IMR-90 (cell line): ENCODE measurements at regions of chr2 and their contacts with region 1.

Region 1: GRCh38 chr2:216195565-216196029 is 86.4 kb downstream of the XRCC5 start:
- DNase-seq: peak; percentile 94
- ATAC-seq: peak; percentile 94
- H3K4me3 ChIP-seq: no peak overlapping the region
- H3K27ac ChIP-seq: no peak overlapping the region
- H3K4me1 ChIP-seq: peaks cover 8% of the 10 kb centered on the region
- H3K27me3 ChIP-seq: no peaks in the 10 kb centered on the region
- CTCF ChIP-seq: no peak
- POLR2A ChIP-seq: no peak
- RAD21 ChIP-seq: no peak

Region 2: DNA sequence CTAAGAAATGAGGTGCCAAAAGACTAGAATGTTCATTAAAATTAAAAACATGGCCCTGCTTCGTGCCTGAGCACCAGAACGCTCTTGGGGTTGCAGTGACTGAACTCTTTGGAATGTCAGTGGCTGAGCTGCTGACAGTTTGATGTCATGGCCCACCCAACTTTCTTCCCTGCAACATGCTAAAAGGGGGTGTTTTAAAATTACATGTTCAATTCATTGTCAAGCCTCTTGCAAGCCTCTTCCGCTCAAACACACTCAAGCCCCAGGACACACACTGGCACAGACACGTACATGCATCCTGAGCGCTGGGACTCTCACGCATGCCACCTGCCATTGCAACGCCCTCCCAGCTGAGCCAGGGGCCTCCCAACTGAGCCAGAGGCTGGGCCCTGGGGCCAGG is 1886.1 kb after region 1 on chr2:
- CTCF ChIA-PET with region 1: no interaction called
- POLR2A ChIA-PET with region 1: interaction called, 13 read pairs
- dilution Hi-C with region 1: no loop called
- in situ Hi-C with region 1: no loop called
- intact Hi-C with region 1: no loop called
- DNase-seq: peak; percentile 65
- ATAC-seq: peak; percentile 81
- H3K4me3 ChIP-seq: no peak overlapping the region
- H3K27ac ChIP-seq: no peak overlapping the region
- H3K4me1 ChIP-seq: peaks cover 3% of the 10 kb centered on the region; the same call in 1 of the 2 replicates
- H3K27me3 ChIP-seq: peaks cover 16% of the 10 kb centered on the region; the same call in 1 of the 2 replicates
- CTCF ChIP-seq: no peak
- POLR2A ChIP-seq: no peak
- RAD21 ChIP-seq: no peak